ENCODE measurements at regions of chr1 and their contacts with region 1.

Region 1: GRCh38 chr1:40315239-40315794 is 1.8 kb downstream of the COL9A2 start:
- DNase-seq: peak; percentile 84
- ATAC-seq: peak; percentile 61
- H3K4me3 Mint-ChIP-seq: peak overlapping the region; percentile 85
- H3K27ac Mint-ChIP-seq: peak overlapping the region; percentile 51
- H3K4me1 Mint-ChIP-seq: peaks cover 53% of the 10 kb centered on the region
- H3K27me3 Mint-ChIP-seq: peaks cover 7% of the 10 kb centered on the region
- CTCF ChIP-seq: no peak

Region 2: GRCh38 chr1:39453603-39454002 is 861.7 kb before region 1 on chr1:
- CTCF ChIA-PET with region 1: no interaction called
- POLR2A ChIA-PET with region 1: no interaction called
- intact Hi-C with region 1: no loop called
- DNase-seq: no peak
- ATAC-seq: no peak
- H3K4me3 Mint-ChIP-seq: no peak overlapping the region
- H3K27ac Mint-ChIP-seq: no peak overlapping the region
- H3K4me1 Mint-ChIP-seq: no peaks in the 10 kb centered on the region
- H3K27me3 Mint-ChIP-seq: no peaks in the 10 kb centered on the region
- CTCF ChIP-seq: no peak

Region 3: DNA sequence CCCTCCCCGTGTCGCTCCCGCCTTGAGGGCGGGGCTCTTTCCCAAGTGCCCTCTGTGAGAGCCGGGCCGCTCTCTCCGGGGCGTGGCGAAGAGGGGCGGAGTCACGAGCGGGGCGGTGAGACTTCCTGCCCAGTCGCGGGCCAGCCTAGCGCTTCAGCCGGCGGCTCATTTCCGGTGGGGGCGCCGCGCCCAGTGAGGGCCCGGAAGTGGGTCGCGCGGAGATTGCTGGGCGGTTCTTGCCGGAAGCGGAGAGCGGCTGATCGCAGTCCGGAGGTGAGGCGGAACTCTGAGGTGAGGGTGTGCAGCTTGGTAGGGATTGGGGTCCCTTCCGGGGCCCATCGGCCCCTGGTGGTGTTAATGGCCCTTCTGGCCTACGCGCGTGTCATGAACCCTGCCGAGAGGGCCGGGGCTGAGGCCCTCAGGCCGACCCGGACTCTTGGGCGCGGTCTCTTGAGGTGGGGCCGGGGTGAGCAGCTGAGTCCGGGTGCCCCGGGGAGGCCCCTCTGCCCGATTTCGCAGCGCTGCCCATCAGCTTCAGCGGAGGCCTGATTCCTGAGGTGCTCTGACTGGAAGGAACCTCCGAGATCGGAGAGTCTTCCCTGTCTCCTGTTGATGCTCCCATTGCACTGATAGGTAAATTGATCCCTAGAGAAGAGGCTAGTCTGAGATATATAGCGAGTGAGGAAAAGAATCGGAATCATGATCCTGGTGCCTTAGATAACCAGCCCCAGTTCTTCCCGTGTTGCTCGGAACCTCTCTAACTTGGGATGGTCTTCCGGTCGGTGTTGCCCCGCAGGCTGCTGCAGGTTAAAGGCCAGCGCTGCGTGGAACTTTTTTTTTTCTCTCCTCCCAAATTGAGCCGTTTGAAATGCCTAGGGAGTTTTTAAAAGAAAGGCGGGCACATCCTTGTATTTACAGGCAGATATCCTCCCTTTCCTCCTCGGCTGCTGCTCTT is 274.5 kb before region 1 on chr1 and contains the start of gene CAP1:
- CTCF ChIA-PET with region 1: no interaction called
- POLR2A ChIA-PET with region 1: interaction called, 5 read pairs
- intact Hi-C with region 1: loop called (anchors 2 kb)
- DNase-seq: peak; percentile 100
- ATAC-seq: peak; percentile 85
- H3K4me3 Mint-ChIP-seq: peak within 1 kb of the TSS; percentile 98
- H3K27ac Mint-ChIP-seq: peak within 1 kb of the TSS; percentile 94
- H3K4me1 Mint-ChIP-seq: peaks cover 78% of the 10 kb centered on the region
- H3K27me3 Mint-ChIP-seq: no peaks in the 10 kb centered on the region
- CTCF ChIP-seq: no peak
- total RNA-seq, gene CAP1: 410 and 411 TPM in 2 replicates

Region 4: DNA sequence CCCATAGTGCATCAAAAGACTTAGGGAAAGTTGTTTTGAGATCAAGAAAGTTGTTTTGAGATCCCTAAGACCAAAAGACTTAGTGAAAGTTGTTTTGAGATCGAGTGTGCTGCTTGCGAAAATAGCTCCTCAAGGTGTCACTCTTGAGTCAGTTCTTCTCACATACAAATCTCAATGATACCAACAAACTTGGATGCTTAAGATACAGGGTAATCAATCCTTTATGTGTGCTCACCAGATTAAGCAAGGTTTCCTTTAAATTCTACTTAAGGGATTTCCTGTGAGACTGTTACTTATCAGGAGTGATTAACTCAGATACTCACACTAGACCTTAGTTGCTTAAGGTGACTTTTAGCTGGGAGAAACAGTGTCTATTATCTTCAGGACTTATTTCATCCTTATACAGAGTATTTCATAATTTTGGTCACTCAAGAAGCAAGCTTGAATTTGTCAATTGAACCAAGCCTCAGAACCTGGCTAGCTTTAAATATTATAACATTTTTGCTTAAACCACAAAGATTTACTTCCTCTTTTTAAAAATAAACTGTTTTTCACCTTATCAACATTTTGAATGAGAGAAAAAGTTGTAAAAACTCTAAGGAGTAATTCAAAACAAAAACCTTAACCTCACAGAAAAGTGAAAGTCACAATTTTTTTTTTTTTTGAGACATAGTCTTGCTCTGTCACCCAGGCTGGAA is 162.1 kb before region 1 on chr1:
- CTCF ChIA-PET with region 1: interaction called, 54 read pairs
- POLR2A ChIA-PET with region 1: interaction called, 42 read pairs
- intact Hi-C with region 1: loop called (anchors 1 kb)
- DNase-seq: no peak
- ATAC-seq: peak; percentile 77
- H3K4me3 Mint-ChIP-seq: peak overlapping the region; percentile 74
- H3K27ac Mint-ChIP-seq: peak overlapping the region; percentile 90
- H3K4me1 Mint-ChIP-seq: peaks cover 27% of the 10 kb centered on the region
- H3K27me3 Mint-ChIP-seq: no peaks in the 10 kb centered on the region
- CTCF ChIP-seq: no peak

Region 5: GRCh38 chr1:40257688-40258444 is 57.5 kb before region 1 on chr1 and contains the start of gene ZMPSTE24:
- CTCF ChIA-PET with region 1: interaction called, 3 read pairs
- POLR2A ChIA-PET with region 1: interaction called, 26 read pairs
- intact Hi-C with region 1: loop called (anchors 1 kb)
- DNase-seq: peak; percentile 89
- ATAC-seq: peak; percentile 95
- H3K4me3 Mint-ChIP-seq: peak within 1 kb of the TSS; percentile 96
- H3K27ac Mint-ChIP-seq: peak within 1 kb of the TSS; percentile 99
- H3K4me1 Mint-ChIP-seq: peaks cover 38% of the 10 kb centered on the region
- H3K27me3 Mint-ChIP-seq: no peaks in the 10 kb centered on the region
- CTCF ChIP-seq: no peak
- total RNA-seq, gene ZMPSTE24: 17.6 and 18.6 TPM in 2 replicates

Region 6: DNA sequence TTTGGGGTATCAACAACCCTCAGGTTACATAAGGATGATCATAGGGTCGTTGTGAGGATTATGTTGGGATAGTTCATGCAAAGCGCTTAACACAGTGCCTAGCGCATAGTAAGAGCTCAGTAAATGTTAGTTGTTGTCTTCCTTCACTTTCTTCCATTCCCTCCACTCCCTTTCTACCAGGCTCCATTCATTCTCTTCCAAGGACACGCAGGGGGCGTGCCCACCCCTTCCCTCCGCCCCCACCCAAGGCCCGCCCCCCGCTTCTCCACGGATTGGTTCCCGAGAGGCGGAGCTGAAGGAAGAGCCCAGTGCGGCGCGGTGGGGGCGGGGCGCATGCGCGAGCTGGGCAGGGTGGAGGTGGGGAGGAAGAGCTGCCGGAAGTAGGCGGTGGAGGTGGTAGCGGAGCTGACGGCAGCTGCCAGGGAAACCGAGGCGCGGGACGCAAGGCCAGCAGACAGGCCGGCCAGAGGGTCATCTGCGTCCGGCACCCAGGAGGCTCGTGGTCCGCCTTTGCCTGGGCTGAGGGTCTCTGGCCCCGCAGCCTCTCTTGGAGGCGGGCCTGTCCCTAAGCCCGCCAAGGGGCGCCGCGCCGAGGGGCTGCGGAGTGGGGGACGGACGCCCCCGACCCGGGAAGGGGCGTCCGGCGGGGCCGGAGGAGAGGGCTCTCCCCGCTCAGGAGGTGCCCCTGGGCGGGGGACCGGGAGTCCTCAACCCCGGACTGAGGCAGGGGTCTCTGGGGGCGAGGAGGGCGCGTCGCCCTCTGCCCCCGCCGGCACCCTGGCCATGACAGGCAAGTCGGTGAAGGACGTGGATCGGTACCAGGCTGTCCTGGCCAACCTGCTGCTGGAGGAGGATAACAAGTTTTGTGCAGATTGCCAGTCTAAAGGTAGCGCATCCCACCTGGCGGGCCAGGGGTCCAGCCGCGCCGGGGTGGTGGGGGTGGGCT is 58.3 kb after region 1 on chr1 and contains the start of gene SMAP2:
- CTCF ChIA-PET with region 1: interaction called, 3 read pairs
- POLR2A ChIA-PET with region 1: interaction called, 24 read pairs
- intact Hi-C with region 1: no loop called
- DNase-seq: peak; percentile 91
- ATAC-seq: peak; percentile 88
- H3K4me3 Mint-ChIP-seq: peak within 1 kb of the TSS; percentile 97
- H3K27ac Mint-ChIP-seq: peak within 1 kb of the TSS; percentile 96
- H3K4me1 Mint-ChIP-seq: peaks cover 52% of the 10 kb centered on the region
- H3K27me3 Mint-ChIP-seq: no peaks in the 10 kb centered on the region
- CTCF ChIP-seq: no peak
- total RNA-seq, gene SMAP2: 202 and 220 TPM in 2 replicates

Region 7: DNA sequence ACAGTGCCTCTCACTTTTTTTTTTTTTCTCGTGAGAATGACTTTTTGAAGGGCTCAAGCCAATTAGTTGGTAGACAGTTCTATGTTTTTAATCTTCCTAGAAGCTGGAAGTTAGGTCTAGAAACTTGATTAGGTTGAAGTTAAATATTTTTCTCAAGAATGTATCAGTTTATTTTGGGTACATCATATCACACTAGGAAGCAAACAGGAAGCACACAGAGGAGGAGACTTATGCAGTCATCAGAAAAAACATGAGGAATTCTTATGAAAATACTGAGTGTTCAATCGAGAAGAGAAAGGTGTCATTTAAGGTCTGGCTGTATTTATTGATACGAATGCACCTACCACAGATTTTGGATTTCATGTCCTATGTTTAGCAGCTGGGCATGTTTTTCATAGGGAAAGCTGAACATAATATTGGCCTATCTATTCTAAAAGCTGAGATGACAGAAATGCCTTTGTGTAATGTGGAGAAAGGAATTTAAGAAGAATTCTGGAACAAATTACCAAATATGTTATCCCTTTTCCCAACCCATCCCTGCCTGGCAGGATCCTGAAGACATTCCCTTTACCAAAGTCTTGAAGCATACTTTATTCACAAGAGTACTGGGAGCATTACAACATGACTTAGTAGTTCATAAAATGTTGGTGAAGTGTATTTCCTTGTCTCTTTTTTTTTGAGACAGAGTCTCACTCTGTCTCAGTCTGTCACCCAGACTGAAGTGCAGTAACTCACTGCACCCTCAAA is 117.5 kb after region 1 on chr1:
- CTCF ChIA-PET with region 1: no interaction called
- POLR2A ChIA-PET with region 1: no interaction called
- intact Hi-C with region 1: no loop called
- DNase-seq: no peak
- ATAC-seq: no peak
- H3K4me3 Mint-ChIP-seq: no peak overlapping the region
- H3K27ac Mint-ChIP-seq: no peak overlapping the region
- H3K4me1 Mint-ChIP-seq: no peaks in the 10 kb centered on the region
- H3K27me3 Mint-ChIP-seq: no peaks in the 10 kb centered on the region
- CTCF ChIP-seq: no peak

Region 8: DNA sequence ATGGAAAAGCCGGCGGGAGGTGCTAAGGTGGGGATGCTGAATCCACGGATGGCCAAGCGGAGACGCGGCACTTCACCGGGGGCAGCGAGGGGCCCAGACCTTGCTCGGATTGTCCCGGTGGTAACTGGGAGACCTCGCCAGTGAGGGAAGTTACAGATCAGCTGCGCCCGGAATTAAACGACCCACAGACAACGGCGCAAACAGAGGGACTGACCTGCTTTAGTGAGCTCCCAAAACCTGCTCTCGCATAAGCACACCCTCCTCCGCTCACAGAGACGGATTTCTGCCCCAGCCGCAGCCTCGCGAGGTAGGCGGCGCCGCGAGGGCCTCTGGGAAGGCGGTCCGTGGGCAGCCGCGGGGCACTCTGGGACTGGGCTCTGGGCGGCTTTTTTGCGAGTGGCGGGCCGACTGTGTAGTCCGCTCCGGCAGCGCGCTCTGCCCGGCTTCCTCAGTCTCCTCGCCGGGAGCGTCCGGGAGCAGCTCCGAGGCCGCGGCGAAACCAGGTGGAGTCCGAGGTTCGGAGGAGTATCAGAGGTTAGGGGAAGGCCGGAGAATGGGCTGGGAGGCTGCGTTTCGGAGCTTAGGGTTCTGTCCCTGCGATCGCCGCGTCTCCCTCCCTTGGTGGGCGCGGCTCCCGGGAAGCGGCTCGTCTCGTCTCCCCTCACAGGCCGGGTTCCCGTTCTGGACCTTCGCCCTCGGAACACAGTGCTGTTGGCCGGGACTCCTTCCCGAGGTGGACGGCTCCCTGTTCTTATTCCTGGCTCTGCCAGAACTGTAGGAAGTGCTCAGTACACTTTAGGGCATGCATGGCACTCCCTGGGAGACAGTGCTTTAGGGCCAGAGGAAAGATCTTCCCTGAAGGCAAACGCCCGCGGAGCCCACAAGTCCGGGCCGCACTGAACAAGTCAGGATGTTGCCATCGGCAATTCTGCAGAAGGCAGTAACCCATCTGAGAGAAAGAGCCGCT is 193.3 kb after region 1 on chr1 and contains the start of gene EXO5:
- CTCF ChIA-PET with region 1: no interaction called
- POLR2A ChIA-PET with region 1: no interaction called
- intact Hi-C with region 1: loop called (anchors 1 kb)
- DNase-seq: peak; percentile 78
- ATAC-seq: peak; percentile 98
- H3K4me3 Mint-ChIP-seq: peak within 1 kb of the TSS; percentile 94
- H3K27ac Mint-ChIP-seq: peak within 1 kb of the TSS; percentile 81
- H3K4me1 Mint-ChIP-seq: peaks cover 18% of the 10 kb centered on the region
- H3K27me3 Mint-ChIP-seq: no peaks in the 10 kb centered on the region
- CTCF ChIP-seq: no peak
- total RNA-seq, gene EXO5: 11.4 and 13.8 TPM in 2 replicates